ENCODE measurements at regions of chr10 and their contacts with region 1.

Region 1: DNA sequence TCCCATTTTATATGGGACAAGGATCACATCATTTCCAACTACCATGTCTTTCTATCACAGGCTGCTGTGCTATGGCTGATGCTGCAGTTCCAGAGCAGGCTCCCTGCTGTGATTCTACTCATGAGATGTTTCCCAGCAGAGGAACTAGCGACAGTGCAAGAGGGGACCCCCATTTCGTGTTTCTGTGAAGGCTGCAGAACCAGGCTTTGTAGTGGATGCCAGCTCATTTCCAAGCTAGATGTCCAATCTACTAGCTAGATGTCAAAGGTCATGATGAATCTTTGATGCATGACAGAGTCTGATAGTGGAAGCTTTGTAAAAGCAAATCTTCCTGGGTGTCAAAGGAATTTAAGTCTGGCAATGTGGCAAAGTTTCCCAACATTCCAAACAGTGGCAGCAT is 21.2 kb upstream of the MYO3A start:
- DNase-seq: no peak
- H3K4me3 ChIP-seq: no peak overlapping the region
- H3K4me3 Mint-ChIP-seq: no peak overlapping the region
- H3K27ac Mint-ChIP-seq: no peak overlapping the region
- H3K4me1 ChIP-seq: peaks cover 5% of the 10 kb centered on the region
- H3K4me1 Mint-ChIP-seq: peaks cover 10% of the 10 kb centered on the region
- H3K27me3 ChIP-seq: no peaks in the 10 kb centered on the region
- H3K27me3 Mint-ChIP-seq: no peaks in the 10 kb centered on the region
- CTCF ChIP-seq: no peak

Region 2: GRCh38 chr10:25738776-25739175 is 174.1 kb before region 1 on chr10:
- CTCF ChIA-PET with region 1: no interaction called
- POLR2A ChIA-PET with region 1: no interaction called
- intact Hi-C with region 1: no loop called
- DNase-seq: no peak
- H3K4me3 ChIP-seq: no peak overlapping the region
- H3K4me3 Mint-ChIP-seq: no peak overlapping the region
- H3K27ac Mint-ChIP-seq: no peak overlapping the region
- H3K4me1 ChIP-seq: no peaks in the 10 kb centered on the region
- H3K4me1 Mint-ChIP-seq: no peaks in the 10 kb centered on the region
- H3K27me3 ChIP-seq: no peaks in the 10 kb centered on the region
- H3K27me3 Mint-ChIP-seq: peaks cover 17% of the 10 kb centered on the region
- CTCF ChIP-seq: no peak

Region 3: DNA sequence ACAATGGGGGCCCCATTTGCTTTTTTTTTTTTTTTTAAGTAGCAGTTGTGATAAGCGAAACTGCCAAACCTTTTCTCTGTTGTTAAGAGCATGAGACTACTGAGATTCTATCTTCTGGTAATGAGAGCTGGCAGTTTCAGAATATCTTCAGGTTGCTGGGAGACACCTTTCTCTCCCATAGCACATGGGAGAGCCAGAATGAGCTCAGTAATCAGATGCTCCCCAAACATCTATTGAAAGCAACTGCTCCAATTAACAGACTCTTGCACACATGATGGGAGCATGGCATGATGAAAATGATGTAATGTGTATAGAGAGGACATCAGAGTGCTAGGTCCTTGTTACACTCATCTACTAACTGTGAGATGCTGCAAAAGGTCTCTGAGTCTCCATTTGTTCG is 40.0 kb after region 1 on chr10:
- CTCF ChIA-PET with region 1: no interaction called
- POLR2A ChIA-PET with region 1: no interaction called
- intact Hi-C with region 1: no loop called
- DNase-seq: no peak
- H3K4me3 ChIP-seq: no peak overlapping the region
- H3K4me3 Mint-ChIP-seq: no peak overlapping the region
- H3K27ac Mint-ChIP-seq: no peak overlapping the region
- H3K4me1 ChIP-seq: no peaks in the 10 kb centered on the region
- H3K4me1 Mint-ChIP-seq: no peaks in the 10 kb centered on the region
- H3K27me3 ChIP-seq: no peaks in the 10 kb centered on the region
- H3K27me3 Mint-ChIP-seq: no peaks in the 10 kb centered on the region
- CTCF ChIP-seq: no peak

Region 4: DNA sequence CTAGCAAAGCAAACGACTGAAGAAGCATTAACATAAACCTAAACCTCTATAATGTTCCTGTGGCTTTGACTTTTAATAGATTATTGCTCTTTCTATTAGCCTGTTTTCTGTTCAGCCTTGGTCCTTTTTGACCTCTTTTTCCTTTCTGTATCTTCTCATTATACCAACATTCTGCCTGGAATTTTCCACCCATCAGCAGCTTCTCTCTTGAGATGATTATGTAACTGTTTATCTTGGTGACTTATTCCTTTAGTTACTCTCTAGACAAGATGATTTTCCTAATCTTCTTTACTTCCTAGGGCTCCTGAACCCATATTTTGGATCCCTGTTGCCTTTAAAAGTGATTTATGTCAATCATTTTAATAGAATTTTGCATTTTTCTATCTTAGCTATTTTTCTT is 102.2 kb after region 1 on chr10:
- CTCF ChIA-PET with region 1: no interaction called
- POLR2A ChIA-PET with region 1: no interaction called
- intact Hi-C with region 1: no loop called
- DNase-seq: no peak
- H3K4me3 ChIP-seq: no peak overlapping the region
- H3K4me3 Mint-ChIP-seq: no peak overlapping the region
- H3K27ac Mint-ChIP-seq: no peak overlapping the region
- H3K4me1 ChIP-seq: no peaks in the 10 kb centered on the region
- H3K4me1 Mint-ChIP-seq: no peaks in the 10 kb centered on the region
- H3K27me3 ChIP-seq: no peaks in the 10 kb centered on the region
- H3K27me3 Mint-ChIP-seq: peaks cover 3% of the 10 kb centered on the region
- CTCF ChIP-seq: no peak

Region 5: GRCh38 chr10:26052326-26052725 is 139.5 kb after region 1 on chr10:
- CTCF ChIA-PET with region 1: no interaction called
- POLR2A ChIA-PET with region 1: no interaction called
- intact Hi-C with region 1: loop called (anchors 1 kb)
- DNase-seq: no peak
- H3K4me3 ChIP-seq: no peak overlapping the region
- H3K4me3 Mint-ChIP-seq: no peak overlapping the region
- H3K27ac Mint-ChIP-seq: no peak overlapping the region
- H3K4me1 ChIP-seq: no peaks in the 10 kb centered on the region
- H3K4me1 Mint-ChIP-seq: no peaks in the 10 kb centered on the region
- H3K27me3 ChIP-seq: no peaks in the 10 kb centered on the region
- H3K27me3 Mint-ChIP-seq: peaks cover 9% of the 10 kb centered on the region
- CTCF ChIP-seq: no peak

Region 6: GRCh38 chr10:26112532-26112931 is 199.7 kb after region 1 on chr10:
- CTCF ChIA-PET with region 1: no interaction called
- POLR2A ChIA-PET with region 1: no interaction called
- intact Hi-C with region 1: no loop called
- DNase-seq: no peak
- H3K4me3 ChIP-seq: no peak overlapping the region
- H3K4me3 Mint-ChIP-seq: no peak overlapping the region
- H3K27ac Mint-ChIP-seq: no peak overlapping the region
- H3K4me1 ChIP-seq: no peaks in the 10 kb centered on the region
- H3K4me1 Mint-ChIP-seq: no peaks in the 10 kb centered on the region
- H3K27me3 ChIP-seq: no peaks in the 10 kb centered on the region
- H3K27me3 Mint-ChIP-seq: peaks cover 9% of the 10 kb centered on the region
- CTCF ChIP-seq: no peak